Activated naive CD4-positive, alpha-beta T cell treated with anti-CD3 and anti-CD28 coated beads for 36 hours (primary cell): ENCODE measurements at regions of chr11 and their contacts with region 1.

Region 1: DNA sequence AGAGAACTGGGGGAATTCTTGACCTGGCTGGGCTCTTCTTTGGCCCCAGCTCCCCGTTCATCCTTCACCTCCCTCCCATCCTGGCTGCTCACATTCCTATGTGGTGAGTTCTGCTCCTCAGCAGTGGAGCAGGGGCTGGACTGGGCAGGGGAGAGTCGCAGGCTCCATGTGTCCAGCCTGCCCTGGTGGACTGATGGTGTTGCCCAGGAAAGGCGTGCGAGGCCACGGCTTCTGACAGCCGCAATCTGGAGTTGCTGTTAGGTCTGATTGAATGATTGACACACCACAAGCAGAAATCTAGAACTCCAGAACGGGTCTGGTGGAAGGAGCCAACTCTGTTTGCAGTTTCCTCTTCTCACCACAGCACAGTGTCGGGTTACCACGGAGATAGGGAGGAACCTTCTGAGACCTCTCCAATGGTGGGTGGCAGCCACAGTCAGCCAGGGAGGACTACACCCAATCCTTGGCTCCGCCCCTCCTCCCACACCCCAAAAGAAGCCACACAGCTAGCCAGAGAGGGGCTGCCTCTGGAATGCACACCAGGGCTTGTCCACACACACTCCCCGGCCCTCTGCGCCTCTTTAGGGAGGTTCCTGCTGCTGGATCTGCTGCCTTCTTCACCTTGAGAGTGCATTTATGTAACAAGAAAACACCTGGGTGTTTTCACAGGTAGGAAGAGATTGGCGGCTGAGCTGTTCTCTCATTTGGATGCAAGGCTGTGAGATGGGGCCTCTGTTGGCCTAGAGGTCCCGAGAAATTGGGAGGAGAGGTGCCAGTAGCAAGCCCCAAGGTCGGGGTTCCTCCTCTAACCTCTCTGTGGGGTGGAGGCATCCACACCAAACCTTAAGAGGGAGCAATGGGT is 56.4 kb upstream of the CD44 start:
- DNase-seq: peak; percentile 89
- H3K4me3 Mint-ChIP-seq: peak overlapping the region; percentile 66
- H3K27ac Mint-ChIP-seq: peak overlapping the region; percentile 90
- H3K4me1 Mint-ChIP-seq: peaks cover 91% of the 10 kb centered on the region
- H3K27me3 Mint-ChIP-seq: no peaks in the 10 kb centered on the region

Region 2: GRCh38 chr11:34916015-34916842 is 166.3 kb before region 1 on chr11 and contains the starts of genes APIP and PDHX:
- CTCF ChIA-PET with region 1: no interaction called
- intact Hi-C with region 1: loop called (anchors 1 kb)
- DNase-seq: peak; percentile 98
- H3K4me3 Mint-ChIP-seq: peak within 1 kb of the TSS; percentile 99
- H3K27ac Mint-ChIP-seq: peak within 1 kb of the TSS; percentile 96
- H3K4me1 Mint-ChIP-seq: peaks cover 44% of the 10 kb centered on the region
- H3K27me3 Mint-ChIP-seq: no peaks in the 10 kb centered on the region
- total RNA-seq, gene APIP: 42.4 to 42.5 TPM
- total RNA-seq, gene PDHX: 38.2 to 40.9 TPM

Region 3: GRCh38 chr11:35040221-35040942 is 42.2 kb before region 1 on chr11:
- CTCF ChIA-PET with region 1: no interaction called
- intact Hi-C with region 1: loop called (anchors 1 kb)
- DNase-seq: peak; percentile 83
- H3K4me3 Mint-ChIP-seq: peak overlapping the region; percentile 76
- H3K27ac Mint-ChIP-seq: peak overlapping the region; percentile 94
- H3K4me1 Mint-ChIP-seq: peaks cover 60% of the 10 kb centered on the region
- H3K27me3 Mint-ChIP-seq: peaks cover 5% of the 10 kb centered on the region

Region 4: DNA sequence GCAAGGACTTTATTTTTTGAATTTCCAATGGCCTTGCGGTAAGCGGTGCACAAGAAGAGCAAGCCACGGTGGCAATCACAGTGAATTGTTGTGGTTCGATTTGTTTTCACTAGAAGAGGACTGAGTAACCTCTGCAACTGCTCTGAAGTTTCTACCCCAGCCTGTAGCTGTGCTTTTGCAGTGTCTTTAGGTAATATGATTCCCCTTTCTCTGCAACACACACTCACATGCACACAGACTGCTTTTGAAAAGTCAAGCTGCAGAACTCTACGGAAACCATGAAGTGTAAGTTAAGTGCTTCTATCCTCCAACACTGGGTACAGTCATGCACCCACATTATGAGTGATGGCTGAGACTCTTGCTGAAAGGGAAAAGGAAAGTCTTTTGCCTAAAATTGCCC is 94.8 kb after region 1 on chr11:
- CTCF ChIA-PET with region 1: no interaction called
- intact Hi-C with region 1: loop called (anchors 1 kb)
- DNase-seq: peak; percentile 56
- H3K4me3 Mint-ChIP-seq: no peak overlapping the region
- H3K27ac Mint-ChIP-seq: peak overlapping the region; percentile 77
- H3K4me1 Mint-ChIP-seq: peaks cover 90% of the 10 kb centered on the region
- H3K27me3 Mint-ChIP-seq: no peaks in the 10 kb centered on the region

Region 5: GRCh38 chr11:35343033-35343598 is 260.6 kb after region 1 on chr11:
- CTCF ChIA-PET with region 1: no interaction called
- intact Hi-C with region 1: loop called (anchors 1 kb)
- DNase-seq: peak; percentile 58
- H3K4me3 Mint-ChIP-seq: peak overlapping the region; percentile 31
- H3K27ac Mint-ChIP-seq: peak overlapping the region; percentile 69
- H3K4me1 Mint-ChIP-seq: peaks cover 52% of the 10 kb centered on the region
- H3K27me3 Mint-ChIP-seq: no peaks in the 10 kb centered on the region